ENCODE measurements at regions of chr5 and their contacts with region 1.

Region 1: DNA sequence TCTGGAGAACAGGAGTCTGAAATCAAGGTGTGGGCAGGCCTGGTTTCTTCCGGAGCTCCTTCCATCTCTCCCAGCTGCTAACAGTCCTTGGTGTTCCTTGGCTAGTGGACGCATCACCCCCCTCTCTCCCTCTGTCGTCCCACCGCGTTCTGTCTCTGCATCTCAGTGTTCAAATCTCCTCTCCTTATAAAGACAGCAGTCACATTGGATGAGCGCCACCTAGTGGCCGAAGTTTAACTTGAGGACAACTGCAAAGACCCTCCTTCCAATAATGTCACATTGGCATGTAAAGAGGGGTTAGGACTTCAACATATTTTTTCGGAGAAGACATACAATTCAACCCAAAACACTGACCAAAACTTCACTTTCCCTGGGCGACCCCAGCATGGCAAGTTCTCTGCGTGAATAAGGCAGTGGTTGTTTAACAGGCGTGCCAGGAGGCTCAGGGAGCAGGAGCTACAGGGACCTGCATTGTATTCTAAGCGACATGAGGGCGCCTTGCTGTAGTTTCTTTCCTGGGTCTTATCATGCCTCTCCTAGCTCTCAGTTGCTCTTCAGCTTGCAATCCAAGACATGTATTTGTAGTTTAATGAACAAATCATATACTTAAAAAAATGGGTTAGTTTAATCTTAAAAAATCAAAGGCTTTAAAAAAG is 27.9 kb upstream of the BASP1 start:
- DNase-seq: peak; percentile 91
- H3K4me3 ChIP-seq: no peak overlapping the region
- H3K27ac ChIP-seq: no peak overlapping the region
- H3K4me1 ChIP-seq: peaks cover 23% of the 10 kb centered on the region
- H3K27me3 ChIP-seq: no peaks in the 10 kb centered on the region
- CTCF ChIP-seq: peak; percentile 65 to 90
- POLR2A ChIP-seq: no peak

Region 2: GRCh38 chr5:16326137-16326536 is 863.4 kb before region 1 on chr5:
- CTCF ChIA-PET with region 1: no interaction called
- POLR2A ChIA-PET with region 1: no interaction called
- dilution Hi-C with region 1: no loop called
- intact Hi-C with region 1: no loop called
- DNase-seq: no peak
- H3K4me3 ChIP-seq: no peak overlapping the region
- H3K27ac ChIP-seq: no peak overlapping the region
- H3K4me1 ChIP-seq: no peaks in the 10 kb centered on the region
- H3K27me3 ChIP-seq: no peaks in the 10 kb centered on the region
- CTCF ChIP-seq: no peak
- POLR2A ChIP-seq: no peak

Region 3: DNA sequence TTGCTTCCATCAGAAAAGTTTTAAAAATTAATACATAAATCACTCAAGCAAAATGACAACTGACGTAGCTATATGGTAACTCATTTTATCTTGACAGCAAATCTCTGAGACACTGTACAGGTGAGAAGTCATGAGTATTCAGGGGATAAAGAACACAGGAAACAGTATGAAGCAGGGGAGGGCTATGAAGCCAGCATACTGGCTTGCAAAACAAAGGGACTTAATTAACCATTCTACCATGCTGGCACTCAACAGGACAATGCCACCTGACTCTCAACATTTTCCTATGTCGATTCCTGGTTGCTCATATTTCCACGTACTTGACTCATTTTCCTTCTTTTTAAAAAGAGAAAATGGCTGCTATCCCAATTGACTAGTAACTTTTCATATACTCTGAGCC is 421.3 kb before region 1 on chr5:
- CTCF ChIA-PET with region 1: interaction called, 13 read pairs
- POLR2A ChIA-PET with region 1: no interaction called
- dilution Hi-C with region 1: no loop called
- intact Hi-C with region 1: no loop called
- DNase-seq: no peak
- H3K4me3 ChIP-seq: no peak overlapping the region
- H3K27ac ChIP-seq: no peak overlapping the region
- H3K4me1 ChIP-seq: no peaks in the 10 kb centered on the region
- H3K27me3 ChIP-seq: no peaks in the 10 kb centered on the region
- CTCF ChIP-seq: no peak
- POLR2A ChIP-seq: no peak

Region 4: DNA sequence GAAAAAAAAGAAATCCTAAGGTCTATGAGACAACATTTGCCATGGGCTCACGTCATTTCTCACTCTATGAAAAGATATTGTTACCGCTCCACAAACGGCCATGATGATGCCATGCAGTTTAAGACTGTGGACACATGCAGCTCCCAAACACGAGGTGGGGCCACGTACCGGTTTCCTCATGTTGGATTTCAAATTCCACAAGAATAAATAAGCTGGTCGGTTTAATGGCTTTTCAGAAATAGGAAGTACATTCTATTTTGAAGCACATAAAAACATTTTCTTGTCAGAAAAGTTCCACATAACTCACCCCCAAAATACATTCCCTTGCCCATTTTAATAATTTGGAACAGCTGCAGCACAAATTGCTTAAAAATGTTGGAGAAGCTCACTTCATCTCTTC is 384.0 kb before region 1 on chr5:
- CTCF ChIA-PET with region 1: interaction called, 16 read pairs
- POLR2A ChIA-PET with region 1: no interaction called
- dilution Hi-C with region 1: no loop called
- intact Hi-C with region 1: no loop called
- DNase-seq: no peak
- H3K4me3 ChIP-seq: no peak overlapping the region
- H3K27ac ChIP-seq: no peak overlapping the region
- H3K4me1 ChIP-seq: peaks cover 9% of the 10 kb centered on the region
- H3K27me3 ChIP-seq: no peaks in the 10 kb centered on the region
- CTCF ChIP-seq: no peak
- POLR2A ChIP-seq: no peak

Region 5: GRCh38 chr5:16916262-16916865 is 273.1 kb before region 1 on chr5:
- CTCF ChIA-PET with region 1: interaction called, 16 read pairs
- POLR2A ChIA-PET with region 1: no interaction called
- dilution Hi-C with region 1: loop called (anchors 25 kb)
- intact Hi-C with region 1: loop called (anchors 5 kb)
- DNase-seq: peak; percentile 93
- H3K4me3 ChIP-seq: no peak overlapping the region
- H3K27ac ChIP-seq: peak overlapping the region; percentile 54
- H3K4me1 ChIP-seq: peaks cover 57% of the 10 kb centered on the region
- H3K27me3 ChIP-seq: no peaks in the 10 kb centered on the region
- CTCF ChIP-seq: no peak
- POLR2A ChIP-seq: no peak

Region 6: DNA sequence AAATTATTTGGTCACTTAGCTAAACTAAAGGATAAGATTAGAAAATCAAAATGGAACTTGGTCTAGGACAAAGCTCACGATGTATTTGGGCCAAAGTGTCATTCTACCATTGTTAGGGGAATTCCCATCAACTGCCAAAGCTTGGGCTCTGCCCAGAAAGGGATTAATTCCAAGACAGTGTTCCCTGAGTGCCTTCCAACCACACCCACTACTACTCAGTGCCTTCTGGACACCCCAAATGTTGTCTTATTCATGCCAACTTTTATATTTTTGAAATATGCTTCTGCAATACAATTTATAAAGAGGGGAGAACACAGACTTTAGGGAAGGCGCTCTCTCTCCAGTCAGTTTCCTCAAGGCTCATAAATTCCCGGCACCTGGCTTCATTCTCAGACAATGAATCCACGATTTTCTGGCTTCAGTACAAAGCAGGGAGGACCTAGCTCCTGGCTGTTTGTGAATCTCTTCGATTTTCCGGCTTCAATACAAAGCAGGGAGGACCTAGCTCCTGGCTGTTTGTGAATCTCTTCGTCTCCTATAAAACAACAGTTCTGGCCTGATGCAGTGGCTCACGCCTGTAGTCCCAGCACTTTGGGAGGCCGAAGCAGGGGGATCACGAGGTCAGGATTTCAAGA is 133.3 kb before region 1 on chr5:
- CTCF ChIA-PET with region 1: interaction called, 20 read pairs
- POLR2A ChIA-PET with region 1: no interaction called
- dilution Hi-C with region 1: no loop called
- intact Hi-C with region 1: no loop called
- DNase-seq: peak; percentile 39
- H3K4me3 ChIP-seq: no peak overlapping the region
- H3K27ac ChIP-seq: no peak overlapping the region
- H3K4me1 ChIP-seq: peaks cover 7% of the 10 kb centered on the region
- H3K27me3 ChIP-seq: no peaks in the 10 kb centered on the region
- CTCF ChIP-seq: no peak
- POLR2A ChIP-seq: no peak

Region 7: GRCh38 chr5:17157916-17158529 is 31.5 kb before region 1 on chr5:
- CTCF ChIA-PET with region 1: interaction called, 20 read pairs
- POLR2A ChIA-PET with region 1: no interaction called
- dilution Hi-C with region 1: no loop called
- intact Hi-C with region 1: no loop called
- DNase-seq: peak; percentile 69
- H3K4me3 ChIP-seq: no peak overlapping the region
- H3K27ac ChIP-seq: no peak overlapping the region
- H3K4me1 ChIP-seq: peaks cover 18% of the 10 kb centered on the region
- H3K27me3 ChIP-seq: no peaks in the 10 kb centered on the region
- CTCF ChIP-seq: no peak
- POLR2A ChIP-seq: no peak